ENCODE measurements at regions of chr6 and their contacts with region 1.

Region 1: GRCh38 chr6:43070028-43070632 is 6.0 kb upstream of the PTK7 start:
- DNase-seq: no peak
- H3K4me3 ChIP-seq: no peak overlapping the region
- H3K27ac ChIP-seq: no peak overlapping the region
- H3K4me1 ChIP-seq: peaks cover 0 to 7% (median 0%) of the 10 kb centered on the region in 3 donors
- H3K27me3 ChIP-seq: no peaks in the 10 kb centered on the region
- CTCF ChIP-seq: peak in 4 of 6 experiments; percentile 43 to 54 (median 48)
- POLR2A ChIP-seq: no peak

Region 2: DNA sequence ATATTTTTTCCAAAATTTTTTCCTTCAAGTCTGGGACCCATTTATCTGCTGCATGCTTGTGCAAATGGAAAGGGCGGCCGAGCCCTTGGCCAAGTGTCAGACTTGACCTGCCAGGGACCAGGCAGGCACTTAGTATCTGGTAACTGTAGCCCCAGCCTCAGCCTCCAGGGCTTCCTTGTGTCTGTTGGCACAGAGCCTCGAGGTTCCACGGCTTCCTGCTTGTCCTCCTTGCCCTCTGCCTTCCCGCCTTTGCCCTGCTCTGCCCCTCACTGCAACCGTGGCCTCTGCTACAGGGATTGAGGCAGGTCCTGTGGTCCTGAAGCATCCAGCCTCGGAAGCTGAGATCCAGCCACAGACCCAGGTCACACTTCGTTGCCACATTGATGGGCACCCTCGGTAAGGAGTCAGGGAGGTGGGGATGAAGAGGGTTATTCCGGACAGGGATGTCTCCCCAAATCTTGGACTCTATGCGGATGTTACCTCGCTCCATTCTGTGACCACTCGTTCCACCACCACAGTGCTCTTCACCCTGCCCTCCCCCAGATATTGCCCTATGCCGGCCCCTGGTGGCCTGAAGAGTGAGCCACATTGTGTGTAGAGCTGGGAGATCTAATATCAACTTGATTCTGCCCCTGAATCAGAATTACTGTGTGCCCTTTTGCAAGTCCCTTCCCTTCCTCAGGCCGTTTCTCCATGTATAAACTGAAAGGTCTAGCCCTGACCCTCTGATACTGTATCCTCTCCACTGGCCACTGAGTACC is 59.5 kb after region 1 on chr6:
- intact Hi-C with region 1: loop called (anchors 5 kb)
- DNase-seq: no peak
- H3K4me3 ChIP-seq: no peak overlapping the region
- H3K27ac ChIP-seq: peak overlapping the region in 1 of 4 donors; percentile 17
- H3K4me1 ChIP-seq: peaks cover 0 to 51% (median 12%) of the 10 kb centered on the region in 3 donors
- H3K27me3 ChIP-seq: no peaks in the 10 kb centered on the region
- CTCF ChIP-seq: peak in 5 of 6 experiments; percentile 37 to 65 (median 50)
- POLR2A ChIP-seq: no peak